Sciatic nerve (tissue), 2 donors: ENCODE measurements at regions of chr9 and their contacts with region 1.

Region 1: DNA sequence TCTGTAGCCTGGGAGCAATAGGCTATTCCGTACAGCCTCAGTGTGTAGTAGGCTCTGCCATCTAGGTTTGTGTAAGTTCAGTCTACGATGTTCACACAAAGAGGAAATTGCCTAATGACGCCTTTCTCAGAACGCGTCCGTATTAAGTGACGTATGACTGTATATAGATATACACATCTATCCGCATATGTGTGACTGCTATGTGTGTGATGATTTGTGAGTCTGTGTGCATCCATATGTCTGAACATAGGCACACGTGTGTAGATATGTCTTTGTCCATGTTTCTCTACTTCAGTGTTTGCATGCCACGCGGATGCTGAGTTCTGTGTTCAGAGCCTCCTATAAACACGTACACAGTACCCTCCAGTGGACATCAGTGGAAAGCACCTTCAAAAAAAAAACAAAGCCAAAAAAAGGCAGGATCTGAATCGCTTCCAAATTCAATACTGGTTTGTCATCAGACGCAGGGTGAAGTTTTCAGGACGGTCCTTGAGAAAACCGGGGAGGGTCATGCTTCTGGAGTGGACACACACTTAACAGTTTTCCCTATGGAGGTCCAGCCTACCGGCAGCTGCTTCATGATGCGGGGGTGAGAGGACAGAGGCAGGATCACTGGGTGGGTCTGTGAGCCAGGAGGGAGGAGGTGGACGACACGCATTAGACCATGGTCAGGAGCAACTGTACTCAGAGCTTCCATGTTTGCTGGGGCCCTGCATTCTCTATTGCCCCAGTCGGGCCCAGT is 29.5 kb upstream of the ALDH1B1 start:
- DNase-seq: no peak
- ATAC-seq: peak; percentile 88

Region 2: DNA sequence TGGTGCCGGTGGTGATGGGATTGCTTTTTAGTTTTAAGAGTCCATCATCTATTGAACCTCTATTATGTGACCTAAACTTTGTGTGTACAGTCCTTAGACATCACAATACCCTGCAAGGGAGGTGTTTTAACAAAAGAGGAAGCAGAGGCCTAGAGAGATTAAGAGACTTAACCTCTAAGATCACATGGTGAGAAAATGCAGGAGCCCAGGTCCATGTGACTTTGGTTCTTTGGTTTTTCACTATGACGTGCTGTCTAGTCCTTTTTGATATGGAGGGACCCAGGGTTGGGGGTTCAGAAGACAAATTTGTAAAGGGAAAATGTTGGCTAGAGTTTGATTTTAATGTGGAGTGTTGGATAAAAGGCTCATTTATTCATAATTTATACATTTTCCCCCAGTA is 643.5 kb before region 1 on chr9:
- intact Hi-C with region 1: no loop called
- DNase-seq: no peak
- ATAC-seq: no peak

Region 3: GRCh38 chr9:37746848-37747753 is 615.9 kb before region 1 on chr9:
- intact Hi-C with region 1: loop called (anchors 10 kb)
- DNase-seq: peak; percentile 71
- ATAC-seq: peak; percentile 75

Region 4: DNA sequence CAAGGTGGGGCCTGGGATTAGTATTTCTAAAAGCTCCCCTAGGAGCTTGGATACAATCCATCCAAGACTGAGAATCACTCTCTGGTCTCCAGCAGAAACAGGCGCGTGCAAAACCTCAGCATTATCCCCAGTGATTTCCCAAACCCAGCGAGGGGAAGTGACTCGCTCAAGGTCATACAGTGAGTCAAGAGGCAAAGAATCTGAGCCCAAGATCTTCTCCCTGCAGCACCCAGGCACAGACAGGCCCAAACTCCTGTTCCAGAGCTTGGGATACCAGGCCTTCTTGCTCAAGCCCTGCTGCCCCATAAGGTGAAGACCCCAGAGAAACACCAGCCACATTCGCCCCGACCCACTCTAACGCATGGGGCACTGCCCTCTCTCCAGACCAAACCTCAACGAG is 327.1 kb before region 1 on chr9:
- intact Hi-C with region 1: no loop called
- DNase-seq: no peak
- ATAC-seq: no peak

Region 5: GRCh38 chr9:38294220-38294960 is 68.6 kb before region 1 on chr9:
- intact Hi-C with region 1: loop called (anchors 10 kb)
- DNase-seq: no peak
- ATAC-seq: no peak

Region 6: GRCh38 chr9:38339087-38339486 is 23.9 kb before region 1 on chr9:
- intact Hi-C with region 1: loop called (anchors 2 kb)
- DNase-seq: no peak
- ATAC-seq: no peak